Right ventricle myocardium superior (tissue), 1 donor: ENCODE measurements at regions of chrX and their contacts with region 1.

Region 1: DNA sequence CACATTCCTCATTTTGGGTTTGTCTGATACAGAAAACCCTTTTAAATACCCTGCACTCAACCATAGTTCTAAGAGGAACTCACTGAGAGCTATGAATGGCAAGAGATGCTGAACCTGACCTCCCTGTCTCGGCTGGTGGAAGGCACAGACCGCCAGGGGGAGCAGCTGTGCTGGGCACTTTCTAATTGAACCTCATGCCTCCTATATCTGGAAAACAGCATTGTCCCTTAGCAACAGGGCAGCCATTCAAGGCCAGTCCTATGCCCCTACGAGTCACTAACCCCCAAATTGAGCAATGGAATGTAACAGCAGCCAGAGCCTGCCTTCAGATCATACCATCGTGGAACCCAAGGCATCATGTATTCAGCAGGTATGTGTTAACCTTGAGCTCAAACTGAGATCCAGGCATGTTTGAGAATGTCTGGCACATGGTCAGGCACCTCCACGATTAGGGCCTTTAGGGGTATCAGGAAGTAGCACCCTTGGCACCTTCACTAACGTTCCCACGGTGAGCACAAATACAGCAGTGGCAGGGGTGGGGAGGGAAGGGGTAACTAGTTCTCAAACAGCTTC is 5.1 kb downstream of the USP27X start:
- DNase-seq: peak; percentile 70
- ATAC-seq: peak; percentile 51

Region 2: DNA sequence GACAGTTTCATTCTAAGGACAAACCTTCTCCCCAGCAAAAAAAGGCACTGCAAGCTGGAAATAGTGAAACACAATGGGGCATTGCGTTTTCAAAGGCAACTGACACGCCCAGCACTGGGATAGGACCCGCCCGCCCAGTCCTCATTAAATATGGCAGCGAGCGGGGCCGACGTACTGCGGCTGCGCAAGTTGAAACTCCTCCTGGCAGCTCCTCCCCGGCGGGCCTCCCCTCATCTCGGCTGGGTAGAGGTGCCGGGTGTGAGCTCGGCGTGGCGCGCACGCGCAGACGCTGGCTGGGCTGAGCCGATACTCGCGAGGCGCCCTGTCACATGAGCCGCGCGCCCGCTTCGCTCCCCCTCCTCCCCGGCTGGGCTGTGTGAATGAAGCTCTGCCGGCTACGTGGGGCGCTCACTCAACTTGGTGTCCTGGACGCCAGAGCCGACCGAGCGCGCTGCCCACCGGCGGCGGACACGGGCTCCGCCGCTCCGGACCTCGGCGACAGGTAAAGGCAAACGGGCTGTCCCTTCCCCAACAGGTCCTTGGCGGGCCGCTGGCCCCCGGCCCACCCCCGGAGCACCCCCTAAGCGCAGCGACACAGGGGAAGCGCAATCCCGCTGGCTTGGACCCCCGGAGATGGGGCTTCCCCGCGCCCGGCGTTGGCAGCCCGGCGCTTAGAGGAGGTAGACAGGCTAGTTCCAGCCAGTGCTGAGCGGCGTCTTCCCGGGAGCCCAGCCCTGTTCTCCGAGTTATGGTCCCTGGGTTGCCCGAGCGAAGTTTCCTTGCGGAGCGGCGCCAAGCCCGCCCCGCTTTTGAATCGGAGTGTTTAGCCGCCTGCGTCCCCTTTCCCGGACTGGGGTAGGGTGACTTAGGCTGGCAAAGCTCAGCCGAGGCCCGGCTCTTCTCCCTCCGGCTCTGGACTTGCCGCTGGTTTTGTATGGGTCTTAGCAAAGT is 38.2 kb after region 1 on chrX and contains the start of gene CLCN5:
- intact Hi-C with region 1: loop called (anchors 5 kb)
- DNase-seq: peak; percentile 98
- ATAC-seq: peak; percentile 99
- total RNA-seq, gene CLCN5: 1.2 TPM

Region 3: GRCh38 chrX:49947781-49948180 is 63.4 kb after region 1 on chrX:
- intact Hi-C with region 1: no loop called
- DNase-seq: no peak
- ATAC-seq: no peak